PC-3 (cell line): ENCODE measurements at regions of chr3 and their contacts with region 1.

Region 1: GRCh38 chr3:187139126-187139894 is at the start of gene RPL39L:
- DNase-seq: peak; percentile 88
- ATAC-seq: peak; percentile 92
- H3K4me3 ChIP-seq: peak within 1 kb of the TSS; percentile 73
- H3K27ac ChIP-seq: peak within 1 kb of the TSS; percentile 62
- H3K4me1 ChIP-seq: peaks cover 21% of the 10 kb centered on the region
- H3K27me3 ChIP-seq: no peaks in the 10 kb centered on the region
- CTCF ChIP-seq: peak; percentile 95
- total RNA-seq, gene RPL39L: 155 and 175 TPM in 2 replicates

Region 2: GRCh38 chr3:187150599-187150998 is 11.3 kb after region 1 on chr3:
- CTCF ChIA-PET with region 1: interaction called, 15 read pairs
- POLR2A ChIA-PET with region 1: no interaction called
- intact Hi-C with region 1: no loop called
- DNase-seq: peak; percentile 24
- ATAC-seq: no peak
- H3K4me3 ChIP-seq: no peak overlapping the region
- H3K27ac ChIP-seq: no peak overlapping the region
- H3K4me1 ChIP-seq: no peaks in the 10 kb centered on the region
- H3K27me3 ChIP-seq: no peaks in the 10 kb centered on the region
- CTCF ChIP-seq: peak; percentile 51; the same call in 1 of the 2 replicates

Region 3: DNA sequence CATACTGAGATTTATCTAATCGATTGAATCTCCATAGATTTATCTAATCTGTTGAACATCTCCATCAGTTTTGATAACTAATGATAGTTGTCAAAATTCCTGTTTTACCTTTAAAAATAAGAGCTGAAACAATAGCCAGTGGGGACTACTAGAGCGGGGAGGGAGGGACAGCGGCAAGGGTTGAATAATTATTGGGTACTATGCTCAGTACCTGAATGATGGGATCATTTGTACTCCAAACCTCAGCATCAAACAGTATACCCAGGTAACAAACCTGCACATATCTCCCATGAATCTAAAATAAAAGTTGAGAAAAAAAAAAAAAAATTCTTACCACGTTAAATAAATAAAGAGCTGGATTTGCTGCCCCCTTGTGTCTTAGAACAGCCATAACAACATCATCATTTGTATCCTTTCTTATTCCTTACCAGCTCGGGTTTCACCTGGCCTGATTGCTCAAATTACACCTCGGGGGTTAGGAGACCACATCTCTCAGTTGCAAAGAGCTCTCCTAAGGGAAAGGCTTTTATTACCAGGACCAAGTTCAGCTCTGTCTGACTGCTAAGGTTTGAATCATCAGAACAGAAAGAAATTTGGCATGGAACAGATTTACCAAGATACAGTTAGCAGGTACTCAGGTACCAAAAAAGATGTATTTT is 25.7 kb after region 1 on chr3:
- CTCF ChIA-PET with region 1: interaction called, 18 read pairs
- POLR2A ChIA-PET with region 1: interaction called, 3 read pairs
- intact Hi-C with region 1: loop called (anchors 1 kb)
- DNase-seq: peak; percentile 82
- ATAC-seq: peak; percentile 81
- H3K4me3 ChIP-seq: no peak overlapping the region
- H3K27ac ChIP-seq: no peak overlapping the region
- H3K4me1 ChIP-seq: peaks cover 5% of the 10 kb centered on the region; the same call in 1 of the 2 replicates
- H3K27me3 ChIP-seq: 0 out of 2 replicates have a peak, but pooled peaks cover 3% of the 10 kb centered on the region
- CTCF ChIP-seq: peak; percentile 80